Sigmoid colon (tissue), 7 donors: ENCODE measurements at regions of chr17 and their contacts with region 1.

Region 1: GRCh38 chr17:65100316-65101140 is 36.6 kb upstream of the RGS9 start:
- DNase-seq: peak; percentile 93
- H3K4me3 ChIP-seq: peak overlapping the region; percentile 38 to 67 (median 58)
- H3K27ac ChIP-seq: peak overlapping the region; percentile 77 to 83 (median 82)
- H3K4me1 ChIP-seq: peaks cover 0 to 32% (median 16%) of the 10 kb centered on the region in 4 donors
- H3K27me3 ChIP-seq: no peaks in the 10 kb centered on the region
- CTCF ChIP-seq: peak; percentile 93 to 99 (median 98)
- EP300 ChIP-seq: no peak
- POLR2A ChIP-seq: no peak

Region 2: GRCh38 chr17:64964796-64965195 is 135.7 kb before region 1 on chr17:
- intact Hi-C with region 1: loop called (anchors 5 kb)
- DNase-seq: no peak
- H3K4me3 ChIP-seq: no peak overlapping the region
- H3K27ac ChIP-seq: peak overlapping the region; percentile 73 to 81 (median 79)
- H3K4me1 ChIP-seq: peaks cover 0 to 38% (median 24%) of the 10 kb centered on the region in 4 donors
- H3K27me3 ChIP-seq: no peaks in the 10 kb centered on the region
- CTCF ChIP-seq: no peak
- EP300 ChIP-seq: no peak
- POLR2A ChIP-seq: no peak

Region 3: DNA sequence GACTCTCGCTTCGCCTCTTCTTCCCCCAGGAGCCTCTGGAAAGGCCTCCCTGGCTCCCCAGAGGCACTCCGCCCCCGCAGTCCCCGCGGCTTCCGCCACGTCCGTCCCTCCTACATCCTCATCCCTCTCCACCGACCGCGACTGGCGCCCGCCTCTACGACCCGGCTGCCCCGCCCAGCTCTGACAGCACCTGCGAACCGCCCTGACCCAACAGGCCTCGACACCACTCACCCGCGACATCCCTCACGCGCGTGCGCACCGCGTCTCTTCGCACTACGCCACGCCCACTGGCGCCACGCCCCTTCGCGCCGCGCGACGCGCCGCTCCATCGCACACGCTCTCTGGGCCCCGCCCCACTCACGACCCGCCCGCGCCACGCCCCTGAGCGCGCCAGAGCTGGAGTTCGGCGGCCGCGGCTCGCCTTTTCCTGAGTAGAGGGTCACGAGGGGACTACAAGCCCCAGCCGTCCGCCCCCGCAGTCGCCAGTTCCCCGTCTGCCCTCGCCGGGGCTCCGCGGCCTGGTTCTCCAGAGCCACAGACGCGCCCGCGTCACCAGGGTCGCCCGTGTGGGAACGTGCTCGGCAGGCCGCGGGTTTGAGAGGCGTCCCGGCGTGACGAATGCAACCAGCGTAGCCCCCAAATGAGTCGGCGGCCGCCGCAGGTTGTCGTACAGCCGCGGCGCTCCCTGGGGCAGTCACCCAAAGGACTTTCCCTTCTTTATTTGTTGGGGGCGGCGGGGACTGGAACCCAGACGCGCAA is 125.0 kb before region 1 on chr17:
- intact Hi-C with region 1: loop called (anchors 2 kb)
- DNase-seq: peak; percentile 98
- H3K4me3 ChIP-seq: peak overlapping the region; percentile 66 to 89 (median 82)
- H3K27ac ChIP-seq: peak overlapping the region; percentile 95 to 99 (median 99)
- H3K4me1 ChIP-seq: peaks cover 0 to 25% (median 14%) of the 10 kb centered on the region in 4 donors
- H3K27me3 ChIP-seq: no peaks in the 10 kb centered on the region
- CTCF ChIP-seq: no peak
- EP300 ChIP-seq: peak in 2 of 4 donors; percentile 42 to 53
- POLR2A ChIP-seq: peak; percentile 82 to 84

Region 4: GRCh38 chr17:65055348-65056261 is 44.9 kb before region 1 on chr17:
- intact Hi-C with region 1: loop called (anchors 1 kb)
- DNase-seq: peak; percentile 88
- H3K4me3 ChIP-seq: peak overlapping the region; percentile 91 to 97 (median 96)
- H3K27ac ChIP-seq: peak overlapping the region; percentile 98 to 99 (median 99)
- H3K4me1 ChIP-seq: peaks cover 0 to 43% (median 33%) of the 10 kb centered on the region in 4 donors
- H3K27me3 ChIP-seq: no peaks in the 10 kb centered on the region
- CTCF ChIP-seq: no peak
- EP300 ChIP-seq: peak in 1 of 4 donors; percentile 39
- POLR2A ChIP-seq: peak in 1 of 2 donors; percentile 33

Region 5: GRCh38 chr17:65219124-65219523 is 118.6 kb after region 1 on chr17:
- intact Hi-C with region 1: no loop called
- DNase-seq: no peak
- H3K4me3 ChIP-seq: no peak overlapping the region
- H3K27ac ChIP-seq: no peak overlapping the region
- H3K4me1 ChIP-seq: no peaks in the 10 kb centered on the region
- H3K27me3 ChIP-seq: no peaks in the 10 kb centered on the region
- CTCF ChIP-seq: no peak
- EP300 ChIP-seq: no peak
- POLR2A ChIP-seq: no peak

Region 6: DNA sequence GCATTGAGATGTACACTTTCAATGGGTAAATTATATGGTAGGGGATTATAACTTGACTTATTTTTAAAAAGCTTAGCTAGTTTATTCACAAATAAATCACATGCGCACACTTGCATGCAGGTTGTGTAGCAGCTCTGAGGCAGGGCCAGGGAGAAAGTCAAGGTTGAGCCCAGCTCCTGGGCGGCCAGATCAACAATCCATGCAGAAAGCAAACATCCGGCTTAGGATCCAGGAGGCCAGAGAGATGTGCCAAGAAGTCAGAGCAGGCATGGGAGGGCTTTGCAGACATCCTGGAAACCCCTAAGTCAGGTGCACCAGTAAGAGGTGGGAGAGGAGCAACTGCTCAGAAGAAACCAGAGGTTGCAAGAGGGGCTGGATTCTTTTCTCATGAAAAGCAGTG is 274.4 kb after region 1 on chr17:
- intact Hi-C with region 1: no loop called
- DNase-seq: no peak
- H3K4me3 ChIP-seq: no peak overlapping the region
- H3K27ac ChIP-seq: no peak overlapping the region
- H3K4me1 ChIP-seq: no peaks in the 10 kb centered on the region
- H3K27me3 ChIP-seq: peaks cover 0 to 13% (median 0%) of the 10 kb centered on the region in 3 donors
- CTCF ChIP-seq: no peak
- EP300 ChIP-seq: no peak
- POLR2A ChIP-seq: no peak